GM18951 (cell line): ENCODE measurements at regions of chr5 and their contacts with region 1.

Region 1: DNA sequence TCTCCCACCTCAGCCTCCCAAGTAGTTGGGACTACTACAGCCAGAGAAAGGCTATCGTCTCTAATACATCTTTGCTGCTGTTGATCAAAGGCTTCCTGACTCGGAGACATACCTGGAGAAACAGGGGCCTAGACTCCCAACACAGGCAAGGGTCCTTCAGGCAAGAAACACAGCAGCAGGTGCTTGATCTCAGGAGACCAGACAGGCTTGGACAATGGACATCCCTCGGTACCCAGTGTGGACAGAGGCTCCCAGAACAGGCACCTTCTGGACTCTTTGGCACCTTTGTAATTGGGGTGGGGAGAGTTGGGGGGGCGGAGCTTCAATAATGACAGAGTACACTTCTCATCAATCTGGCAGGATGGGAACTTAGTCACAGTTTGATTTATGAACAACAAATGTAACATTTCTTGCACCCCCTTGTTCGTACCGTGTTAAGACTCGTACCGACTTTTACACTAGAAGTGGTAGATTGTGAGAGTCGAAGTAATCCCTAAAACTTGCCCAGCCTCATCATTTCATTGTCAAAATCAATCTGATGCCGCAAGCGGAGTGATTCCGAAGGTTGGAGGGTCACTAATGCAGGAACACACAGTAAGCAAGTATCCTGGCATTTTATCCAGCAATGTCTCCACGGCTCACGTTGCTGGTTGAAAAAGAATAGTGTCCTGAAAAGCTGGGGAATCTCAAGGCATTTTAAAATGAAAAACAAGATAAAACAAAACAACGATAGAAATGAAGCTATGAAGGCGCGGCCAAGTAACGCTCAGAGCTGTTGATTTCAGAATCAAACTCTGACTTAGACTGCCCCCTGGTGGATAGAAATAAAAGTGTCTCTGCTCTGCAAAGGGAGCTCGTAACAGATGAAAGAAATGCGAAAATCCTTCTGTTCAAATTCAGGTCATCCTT is 46.4 kb upstream of the STK32A start:
- POLR2A ChIP-seq: no peak

Region 2: DNA sequence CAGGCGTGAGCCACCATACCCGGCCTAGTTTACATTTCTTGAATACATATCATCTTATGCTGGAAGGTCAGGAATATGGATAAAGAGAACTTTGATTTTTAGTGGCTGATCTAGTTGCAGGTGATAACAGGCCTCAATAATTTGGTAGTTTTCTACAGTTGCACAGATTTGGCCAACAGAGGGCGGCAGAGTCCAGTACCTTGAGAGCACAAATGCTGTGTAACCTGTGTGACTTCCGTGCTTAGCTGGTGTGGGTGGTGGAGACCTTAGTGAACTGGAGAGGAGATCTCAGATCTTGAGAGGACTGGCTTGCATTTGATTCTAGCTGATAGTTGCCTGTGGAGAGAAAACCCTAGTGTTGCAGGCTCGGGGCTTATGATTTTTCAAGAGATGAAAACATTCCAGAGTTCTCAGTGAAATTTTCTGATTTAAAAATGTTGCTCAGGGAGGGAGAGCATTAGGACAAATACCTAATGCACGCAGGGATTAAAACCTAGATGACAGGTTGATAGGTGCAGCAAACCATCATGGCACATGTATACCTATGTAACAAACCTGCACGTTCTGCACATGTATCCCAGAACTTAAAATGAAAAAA is 655.1 kb before region 1 on chr5:
- in situ Hi-C with region 1: loop called (anchors 25 kb)
- POLR2A ChIP-seq: no peak

Region 3: DNA sequence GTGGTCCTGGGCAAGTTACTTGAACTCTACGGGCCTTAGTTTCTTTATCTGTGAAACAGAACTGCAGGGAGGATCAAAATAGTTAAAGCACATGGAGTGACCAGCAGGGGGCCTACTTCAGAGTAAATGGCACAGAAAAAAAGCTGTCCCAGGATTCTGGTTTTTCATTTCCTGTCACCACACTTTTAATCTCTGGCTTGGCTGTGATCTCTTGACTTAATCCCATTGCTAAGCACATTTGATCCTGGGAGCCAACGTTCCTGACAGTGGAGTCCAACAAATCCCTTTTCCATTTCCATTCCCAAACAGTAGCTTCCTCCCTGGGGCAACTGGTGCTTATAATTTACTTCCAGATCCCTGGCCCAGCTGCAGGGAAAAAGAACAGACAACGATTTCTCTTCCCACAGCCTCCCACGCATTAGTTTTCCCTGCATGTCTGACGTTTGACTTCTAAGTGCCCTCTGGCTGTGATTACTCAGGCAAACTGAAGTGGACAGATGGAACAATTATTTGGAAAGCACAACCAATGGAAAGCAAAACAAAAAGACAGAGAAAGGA is 90.1 kb before region 1 on chr5:
- in situ Hi-C with region 1: no loop called
- POLR2A ChIP-seq: no peak

Region 4: GRCh38 chr5:147479949-147480348 is 291.5 kb after region 1 on chr5:
- in situ Hi-C with region 1: no loop called
- POLR2A ChIP-seq: no peak